Gastrocnemius medialis (tissue), 4 donors: ENCODE measurements at regions of chr16 and their contacts with region 1.

Region 1: DNA sequence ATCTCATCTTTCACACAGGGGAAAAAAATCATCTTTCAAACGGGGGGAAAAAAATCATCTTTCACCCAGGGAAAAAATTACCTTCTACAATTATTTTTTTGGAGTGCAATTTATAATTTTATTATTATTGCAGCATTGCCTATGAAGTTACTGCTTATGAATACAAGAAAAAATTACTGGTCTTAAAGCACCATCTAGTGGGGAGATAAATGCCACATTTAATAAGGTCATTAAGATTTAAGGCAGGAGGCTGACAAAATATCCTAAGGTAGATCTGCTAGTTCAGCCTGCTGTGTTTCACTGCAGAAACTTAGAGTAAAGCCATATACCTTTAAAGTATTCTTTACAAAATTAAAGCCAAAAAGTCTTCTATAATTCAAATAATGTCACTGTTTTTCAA is 13.7 kb downstream of the SHCBP1 start:
- DNase-seq: no peak
- ATAC-seq: no peak
- H3K4me3 ChIP-seq: no peak overlapping the region
- H3K27ac ChIP-seq: no peak overlapping the region
- H3K4me1 ChIP-seq: no peaks in the 10 kb centered on the region
- H3K27me3 ChIP-seq: no peaks in the 10 kb centered on the region
- CTCF ChIP-seq: peak in 4 of 5 experiments; percentile 12 to 48 (median 28)
- POLR2A ChIP-seq: no peak

Region 2: GRCh38 chr16:46428125-46429061 is 179.1 kb before region 1 on chr16:
- in situ Hi-C with region 1: no loop called
- intact Hi-C with region 1: no loop called
- DNase-seq: no peak
- ATAC-seq: no peak
- H3K4me3 ChIP-seq: no peak overlapping the region
- H3K27ac ChIP-seq: no peak overlapping the region
- H3K4me1 ChIP-seq: no peaks in the 10 kb centered on the region
- H3K27me3 ChIP-seq: peaks cover 12 to 18% (median 17%) of the 10 kb centered on the region in 3 donors
- CTCF ChIP-seq: no peak
- POLR2A ChIP-seq: no peak

Region 3: GRCh38 chr16:46555951-46556350 is 51.6 kb before region 1 on chr16:
- in situ Hi-C with region 1: loop called in 1 of 4 experiments (anchors 10 kb)
- intact Hi-C with region 1: loop called (anchors 2 kb)
- DNase-seq: no peak
- ATAC-seq: no peak
- H3K4me3 ChIP-seq: no peak overlapping the region
- H3K27ac ChIP-seq: no peak overlapping the region
- H3K4me1 ChIP-seq: no peaks in the 10 kb centered on the region
- H3K27me3 ChIP-seq: no peaks in the 10 kb centered on the region
- CTCF ChIP-seq: no peak
- POLR2A ChIP-seq: no peak

Region 4: DNA sequence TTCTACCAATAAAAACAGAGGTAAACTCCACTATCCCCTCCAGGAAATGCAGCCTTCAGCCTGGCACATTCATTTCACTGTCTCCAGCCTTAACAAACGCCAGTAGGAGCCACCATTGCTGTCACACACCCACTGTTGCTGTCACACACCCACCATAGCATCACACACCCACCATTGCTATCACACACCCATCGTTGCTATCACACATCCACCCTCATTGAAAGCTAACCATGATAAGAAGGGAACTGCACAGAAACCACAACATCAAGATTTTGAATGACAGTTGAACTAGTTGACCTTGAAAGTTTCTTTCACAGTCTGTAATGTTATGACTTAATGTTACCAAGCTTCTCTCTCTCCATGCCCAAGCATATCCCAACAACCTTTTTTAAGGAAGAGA is 24.5 kb before region 1 on chr16:
- in situ Hi-C with region 1: no loop called
- intact Hi-C with region 1: no loop called
- DNase-seq: no peak
- ATAC-seq: no peak
- H3K4me3 ChIP-seq: no peak overlapping the region
- H3K27ac ChIP-seq: no peak overlapping the region
- H3K4me1 ChIP-seq: no peaks in the 10 kb centered on the region
- H3K27me3 ChIP-seq: no peaks in the 10 kb centered on the region
- CTCF ChIP-seq: no peak
- POLR2A ChIP-seq: no peak